ENCODE measurements at regions of chr14 and their contacts with region 1.

Region 1: GRCh38 chr14:103910262-103910935 is 17.9 kb upstream of the TDRD9 start:
- DNase-seq: no peak

Region 2: DNA sequence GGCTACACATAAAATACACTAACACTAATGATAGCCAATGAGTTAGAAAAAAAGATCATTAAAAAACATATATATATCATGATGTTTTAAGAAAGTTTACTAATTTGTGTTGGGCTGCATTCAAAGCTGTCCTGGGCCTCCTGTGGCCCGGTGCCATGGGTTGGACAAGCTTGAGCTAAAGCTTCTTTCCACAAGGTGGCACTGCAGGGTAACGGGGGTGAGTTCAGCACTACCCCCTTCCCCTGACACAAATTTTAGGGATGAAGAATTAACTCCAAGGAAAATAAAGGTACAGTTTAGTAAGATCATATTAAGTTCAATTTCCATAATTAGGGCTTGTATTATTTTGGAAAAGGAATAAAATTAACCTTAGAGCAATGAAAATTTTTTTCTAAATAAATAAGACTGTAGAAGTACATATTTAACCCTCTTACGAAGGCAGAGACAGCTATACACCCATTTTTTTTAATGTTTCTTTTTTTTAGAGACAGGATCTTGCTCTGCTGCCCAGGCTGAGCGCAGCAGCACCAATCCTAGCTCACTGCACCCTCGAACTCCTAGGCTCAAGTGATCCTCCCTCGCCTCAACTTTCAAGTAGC is 101.9 kb before region 1 on chr14:
- intact Hi-C with region 1: loop called in 1 of 2 experiments (anchors 5 kb)
- DNase-seq: peak; percentile 84

Region 3: GRCh38 chr14:103819503-103820307 is 90.7 kb before region 1 on chr14:
- intact Hi-C with region 1: loop called in 1 of 2 experiments (anchors 10 kb)
- DNase-seq: no peak

Region 4: DNA sequence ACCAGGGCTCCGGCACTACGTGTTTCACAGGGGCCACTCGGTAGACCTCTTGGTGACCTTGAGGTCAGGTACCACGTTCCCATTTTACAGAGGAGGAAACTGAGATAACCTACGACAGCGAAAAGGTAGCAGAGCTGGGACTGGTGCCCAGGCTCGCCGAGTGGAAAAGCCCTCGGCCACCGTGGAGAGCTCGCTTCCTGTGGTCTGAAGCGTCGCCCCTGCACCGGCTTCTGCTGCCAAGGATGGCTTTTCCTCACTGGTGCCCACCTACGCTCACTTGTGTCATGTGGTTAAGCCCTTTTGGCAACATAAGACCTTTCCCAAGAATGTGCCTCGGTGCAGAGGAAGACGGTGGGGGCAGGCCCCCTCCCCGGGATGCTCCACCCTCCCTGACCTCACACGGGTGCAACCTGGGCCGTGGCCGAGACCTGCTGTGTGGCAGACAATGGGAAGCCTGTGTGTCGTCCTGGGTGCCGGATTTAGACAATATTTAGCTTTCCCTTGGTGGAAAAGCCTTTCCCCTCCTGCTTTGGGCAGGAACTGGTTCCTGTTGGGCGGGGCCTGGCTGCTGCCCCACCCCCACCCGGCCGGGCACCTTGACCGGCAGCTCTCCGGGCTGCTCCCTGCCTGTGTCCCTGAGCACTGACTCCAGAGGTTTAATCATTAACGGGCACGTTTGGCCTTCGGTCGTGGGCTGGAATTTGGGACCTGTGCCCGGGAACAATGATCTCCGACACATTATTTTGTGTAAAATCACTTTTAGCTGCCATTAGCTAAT is 30.6 kb before region 1 on chr14:
- intact Hi-C with region 1: loop called in 1 of 2 experiments (anchors 1 kb)
- DNase-seq: no peak

Region 5: DNA sequence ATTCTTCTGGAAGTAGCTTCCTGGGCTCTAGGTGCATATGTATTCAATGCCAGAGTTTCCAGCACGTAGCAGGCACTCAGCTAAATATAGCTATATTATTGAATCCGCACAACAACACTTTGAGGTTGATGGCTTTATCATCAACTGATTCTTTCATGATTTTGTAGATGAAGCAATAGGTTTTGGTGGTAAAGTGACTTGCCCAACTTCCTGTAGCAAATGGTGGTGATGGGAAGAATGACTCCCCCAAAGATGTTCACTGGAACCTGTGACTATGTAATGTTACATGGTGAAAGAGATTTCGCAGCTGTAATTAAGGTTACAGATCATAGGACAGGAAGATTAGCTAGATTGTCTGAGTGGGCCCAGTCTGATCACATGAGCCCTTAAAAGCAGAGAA is 21.0 kb after region 1 on chr14:
- intact Hi-C with region 1: no loop called
- DNase-seq: no peak

Measured in posterior vena cava (tissue), 2 donors.